Activated CD4-positive, alpha-beta T cell treated with anti-CD3 and anti-CD28 coated beads for 36 hours (primary cell): ENCODE measurements at regions of chr7 and their contacts with region 1.

Region 1: GRCh38 chr7:105149827-105150226 is 135.8 kb downstream of the KMT2E start:
- DNase-seq: no peak
- ATAC-seq: no peak
- H3K4me3 Mint-ChIP-seq: no peak overlapping the region
- H3K27ac Mint-ChIP-seq: no peak overlapping the region
- H3K4me1 Mint-ChIP-seq: peaks cover 17% of the 10 kb centered on the region
- H3K27me3 Mint-ChIP-seq: no peaks in the 10 kb centered on the region

Region 2: DNA sequence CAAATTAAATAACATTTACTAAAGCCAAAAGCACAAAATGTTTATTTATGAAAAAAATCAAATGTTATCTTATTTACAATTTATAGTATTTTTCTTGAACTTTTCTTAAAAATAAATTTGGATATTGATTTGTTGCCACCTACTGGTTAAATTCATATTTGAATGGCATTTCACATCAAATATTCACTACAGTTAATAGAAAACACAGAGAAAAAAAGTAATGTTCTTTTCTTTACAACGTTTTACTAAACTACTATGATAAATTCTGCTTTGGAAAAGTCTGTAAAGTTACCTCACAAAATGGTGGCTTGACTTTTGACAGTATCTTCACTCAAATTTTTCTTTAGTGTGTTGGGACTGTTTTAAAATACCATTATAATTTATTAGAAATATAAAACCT is 186.2 kb after region 1 on chr7:
- CTCF ChIA-PET with region 1: interaction called, 4 read pairs
- POLR2A ChIA-PET with region 1: no interaction called
- intact Hi-C with region 1: loop called (anchors 1 to 10 kb)
- DNase-seq: no peak
- ATAC-seq: no peak
- H3K4me3 Mint-ChIP-seq: no peak overlapping the region
- H3K27ac Mint-ChIP-seq: no peak overlapping the region
- H3K4me1 Mint-ChIP-seq: peaks cover 21% of the 10 kb centered on the region
- H3K27me3 Mint-ChIP-seq: no peaks in the 10 kb centered on the region

Region 3: GRCh38 chr7:106139265-106140251 is 989.7 kb after region 1 on chr7:
- CTCF ChIA-PET with region 1: no interaction called
- POLR2A ChIA-PET with region 1: no interaction called
- intact Hi-C with region 1: no loop called
- DNase-seq: no peak
- ATAC-seq: no peak
- H3K4me3 Mint-ChIP-seq: no peak overlapping the region
- H3K27ac Mint-ChIP-seq: no peak overlapping the region
- H3K4me1 Mint-ChIP-seq: no peaks in the 10 kb centered on the region
- H3K27me3 Mint-ChIP-seq: no peaks in the 10 kb centered on the region